ENCODE measurements at regions of chr14 and their contacts with region 1.

Region 1: DNA sequence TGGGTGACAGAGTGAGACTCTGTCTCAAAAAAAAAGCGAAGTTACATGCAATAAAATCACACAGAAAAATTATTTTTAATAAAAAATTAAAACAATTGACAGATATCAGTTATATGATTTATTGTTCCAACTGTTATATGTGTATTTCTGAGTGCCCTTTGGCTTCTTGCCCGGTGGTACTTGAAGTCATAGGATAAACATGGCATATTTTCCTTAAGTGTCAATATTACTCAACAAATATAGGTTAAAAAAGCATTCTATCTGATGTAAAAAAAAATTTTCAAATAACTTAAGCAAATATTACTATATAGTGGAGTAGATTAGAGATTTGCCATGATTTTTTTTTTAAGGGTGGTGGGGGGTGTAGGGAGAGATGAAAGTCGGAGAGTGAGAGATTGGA is 33.5 kb downstream of the RBM25 start:
- H3K4me3 Mint-ChIP-seq: no peak overlapping the region
- H3K27ac Mint-ChIP-seq: peak overlapping the region; percentile 80
- H3K4me1 Mint-ChIP-seq: peaks cover 20% of the 10 kb centered on the region
- H3K27me3 Mint-ChIP-seq: no peaks in the 10 kb centered on the region

Region 2: DNA sequence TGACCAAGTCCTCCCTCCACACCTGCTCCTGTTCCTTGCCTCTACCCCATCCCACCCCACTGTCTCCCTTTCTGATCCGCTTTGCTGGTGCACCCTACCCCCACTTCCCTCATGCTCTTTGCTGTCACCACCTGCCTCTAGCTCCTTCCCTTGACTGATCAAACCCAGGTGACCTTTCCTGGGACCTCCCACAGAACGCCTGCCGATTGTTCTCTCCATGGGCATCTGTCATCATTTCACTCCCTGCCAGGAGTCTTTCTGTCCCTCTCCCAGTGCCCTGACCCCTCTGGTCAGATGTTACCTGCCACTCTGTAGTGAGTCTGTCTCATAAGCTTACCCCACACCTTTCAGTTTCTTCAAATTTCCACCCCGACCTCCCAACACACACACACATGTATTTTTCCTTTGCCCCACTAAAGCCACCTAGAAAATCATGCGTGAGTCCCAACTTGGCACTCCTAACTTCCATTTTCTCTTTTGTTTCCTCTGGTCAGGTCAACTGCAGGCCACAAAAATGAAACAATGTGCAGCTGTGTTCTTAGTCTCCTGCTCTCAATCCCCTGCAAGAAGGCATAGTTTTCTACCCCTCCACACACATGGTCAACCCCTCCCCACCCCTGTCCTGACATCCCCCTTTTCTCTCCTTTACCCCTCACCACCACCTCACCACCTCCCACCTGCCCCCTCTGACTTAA is 427.7 kb before region 1 on chr14:
- intact Hi-C with region 1: no loop called
- H3K4me3 Mint-ChIP-seq: no peak overlapping the region
- H3K27ac Mint-ChIP-seq: no peak overlapping the region
- H3K4me1 Mint-ChIP-seq: no peaks in the 10 kb centered on the region
- H3K27me3 Mint-ChIP-seq: peaks cover 12% of the 10 kb centered on the region

Region 3: GRCh38 chr14:73189651-73190050 is 97.8 kb after region 1 on chr14:
- intact Hi-C with region 1: loop called (anchors 10 kb)
- H3K4me3 Mint-ChIP-seq: no peak overlapping the region
- H3K27ac Mint-ChIP-seq: no peak overlapping the region
- H3K4me1 Mint-ChIP-seq: no peaks in the 10 kb centered on the region
- H3K27me3 Mint-ChIP-seq: no peaks in the 10 kb centered on the region

Measured in dendritic cell treated with granulocyte-macrophage colony-stimulating factor and Interleukin-4, amounts not matched to agents 40 ng/mL and 50 ng/mL, for 4 days (primary cell).